ENCODE measurements at regions of chr22 and their contacts with region 1.

Region 1: GRCh38 chr22:41940832-41941765 is 5.9 kb downstream of the CENPM start:
- DNase-seq: peak; percentile 80 to 91 (median 84)
- ATAC-seq: peak; percentile 78 to 88 (median 87)
- H3K4me3 ChIP-seq: no peak overlapping the region
- H3K27ac ChIP-seq: peak overlapping the region in 5 of 12 donors; percentile 13 to 84 (median 23)
- H3K4me1 ChIP-seq: peaks cover 0 to 43% (median 14%) of the 10 kb centered on the region in 12 donors
- H3K27me3 ChIP-seq: no peaks in the 10 kb centered on the region
- CTCF ChIP-seq: peak; percentile 85 to 97 (median 93)
- POLR2A ChIP-seq: no peak

Region 2: DNA sequence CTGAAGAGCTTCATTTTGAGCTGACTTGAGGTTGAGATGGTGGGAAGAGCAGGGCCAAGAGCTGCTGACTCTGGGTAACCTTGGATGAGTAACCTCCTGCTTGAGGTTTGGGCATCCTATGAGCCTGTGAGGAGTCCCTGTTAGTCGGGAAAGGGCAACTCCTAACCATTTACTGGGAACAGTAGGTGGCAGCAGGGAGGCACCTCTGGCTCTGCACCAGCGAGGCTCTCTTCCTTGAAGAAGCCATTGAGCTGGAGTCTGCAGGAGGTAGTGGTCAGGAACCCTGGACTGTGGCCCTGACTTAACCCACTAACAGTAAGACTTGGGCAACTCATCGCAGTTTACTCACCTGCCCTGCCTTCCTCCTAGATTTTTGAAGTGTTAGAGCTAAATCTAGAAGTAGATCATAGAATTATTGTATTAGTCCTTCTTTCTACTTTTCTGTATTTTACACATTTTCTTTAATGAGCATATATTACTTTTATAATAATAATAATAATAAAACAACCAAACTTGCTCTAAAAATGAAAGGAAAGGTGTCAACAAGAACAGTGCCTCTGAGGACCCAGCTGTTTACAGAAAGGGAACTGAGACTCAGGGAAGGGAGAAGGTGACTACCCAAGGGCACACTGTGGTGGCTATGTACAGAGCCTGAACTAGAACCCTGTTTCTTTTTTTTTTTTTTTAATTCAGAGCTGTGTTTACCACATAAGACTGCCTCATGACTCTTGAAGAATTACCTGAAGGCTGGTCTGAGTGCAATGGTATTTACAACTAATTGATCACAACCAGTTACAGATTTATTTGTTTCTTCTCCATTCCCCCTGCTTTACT is 194.3 kb before region 1 on chr22:
- intact Hi-C with region 1: loop called (anchors 1 to 5 kb)
- DNase-seq: peak; percentile 59 to 82 (median 69)
- ATAC-seq: peak; percentile 64 to 94 (median 88)
- H3K4me3 ChIP-seq: no peak overlapping the region
- H3K27ac ChIP-seq: no peak overlapping the region
- H3K4me1 ChIP-seq: no peaks in the 10 kb centered on the region
- H3K27me3 ChIP-seq: peaks cover 0 to 6% (median 0%) of the 10 kb centered on the region in 9 donors
- CTCF ChIP-seq: peak; percentile 51 to 79 (median 68)
- POLR2A ChIP-seq: no peak

Region 3: GRCh38 chr22:41822317-41823060 is 118.6 kb before region 1 on chr22:
- intact Hi-C with region 1: loop called (anchors 1 to 5 kb)
- DNase-seq: no peak
- ATAC-seq: peak in 2 of 4 donors; percentile 16 to 26
- H3K4me3 ChIP-seq: no peak overlapping the region
- H3K27ac ChIP-seq: no peak overlapping the region
- H3K4me1 ChIP-seq: peaks cover 3 to 29% (median 22%) of the 10 kb centered on the region in 12 donors
- H3K27me3 ChIP-seq: no peaks in the 10 kb centered on the region
- CTCF ChIP-seq: peak; percentile 18 to 61 (median 48)
- POLR2A ChIP-seq: no peak

Region 4: GRCh38 chr22:41891407-41891806 is 49.7 kb before region 1 on chr22:
- intact Hi-C with region 1: loop called in 1 of 10 experiments (anchors 5 kb)
- DNase-seq: peak in 1 of 5 donors; percentile 76
- ATAC-seq: peak; percentile 47 to 91 (median 76)
- H3K4me3 ChIP-seq: no peak overlapping the region
- H3K27ac ChIP-seq: peak overlapping the region in 11 of 12 donors; percentile 24 to 87 (median 75)
- H3K4me1 ChIP-seq: peaks cover 0 to 37% (median 6%) of the 10 kb centered on the region in 12 donors
- H3K27me3 ChIP-seq: no peaks in the 10 kb centered on the region
- CTCF ChIP-seq: no peak
- POLR2A ChIP-seq: no peak

Region 5: DNA sequence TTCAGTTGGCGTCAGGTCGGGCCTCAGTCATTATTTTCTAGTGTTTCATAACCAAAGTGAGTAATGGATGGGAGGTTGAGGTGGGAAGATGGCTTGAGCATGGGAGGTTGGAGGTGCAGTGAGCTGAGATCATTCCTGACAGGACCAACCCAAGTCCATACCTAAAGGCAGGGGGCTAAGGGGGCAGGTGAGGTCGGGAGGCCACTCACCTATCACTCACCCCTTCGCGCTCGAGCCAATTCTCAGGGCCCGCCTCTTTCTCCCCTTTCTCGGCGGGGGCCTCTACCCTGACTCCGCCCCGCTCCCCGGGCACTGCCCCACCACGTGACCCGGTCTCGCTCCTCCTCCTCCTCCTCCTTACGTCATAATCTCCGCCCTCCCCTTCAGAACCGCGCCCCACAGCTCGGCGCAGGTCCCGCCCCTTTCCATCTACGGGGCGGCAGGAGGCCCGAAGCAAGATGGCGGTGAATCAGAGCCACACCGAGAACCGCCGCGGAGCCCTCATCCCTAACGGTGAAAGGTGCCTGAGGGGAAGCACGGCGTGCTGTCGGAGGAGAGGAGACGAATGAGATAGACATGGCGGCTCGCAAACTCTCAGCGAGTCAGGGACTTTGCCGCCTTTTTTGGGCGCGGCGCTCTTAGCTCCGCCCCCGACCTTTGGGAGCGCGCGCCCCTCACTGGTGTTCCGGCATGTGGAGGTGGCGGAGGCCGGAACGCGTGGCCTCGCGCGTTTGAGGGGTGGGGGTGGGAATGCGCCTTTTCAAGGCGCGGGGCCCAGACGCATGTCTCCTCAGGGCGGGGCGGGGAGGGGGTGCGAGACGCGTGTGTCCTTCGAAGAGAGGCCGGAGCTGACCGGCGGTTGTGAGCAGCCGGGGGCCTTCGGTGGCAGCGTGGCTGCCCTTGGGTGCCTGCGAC is 57.5 kb after region 1 on chr22 and contains the start of gene WBP2NL:
- intact Hi-C with region 1: no loop called
- DNase-seq: peak; percentile 78 to 91 (median 82)
- ATAC-seq: peak; percentile 93 to 98 (median 96)
- H3K4me3 ChIP-seq: peak within 1 kb of the TSS; percentile 3 to 69 (median 55)
- H3K27ac ChIP-seq: peak within 1 kb of the TSS in 2 of 12 donors; percentile 3 to 60
- H3K4me1 ChIP-seq: peaks cover 0 to 19% (median 2%) of the 10 kb centered on the region in 12 donors
- H3K27me3 ChIP-seq: peaks cover 0 to 10% (median 0%) of the 10 kb centered on the region in 9 donors
- CTCF ChIP-seq: no peak
- POLR2A ChIP-seq: peak in 1 of 2 donors; percentile 17
- total RNA-seq, gene WBP2NL: 0.30 to 1.1 (median 0.40) TPM in 8 of 9 donors, not detected in the other

Region 6: DNA sequence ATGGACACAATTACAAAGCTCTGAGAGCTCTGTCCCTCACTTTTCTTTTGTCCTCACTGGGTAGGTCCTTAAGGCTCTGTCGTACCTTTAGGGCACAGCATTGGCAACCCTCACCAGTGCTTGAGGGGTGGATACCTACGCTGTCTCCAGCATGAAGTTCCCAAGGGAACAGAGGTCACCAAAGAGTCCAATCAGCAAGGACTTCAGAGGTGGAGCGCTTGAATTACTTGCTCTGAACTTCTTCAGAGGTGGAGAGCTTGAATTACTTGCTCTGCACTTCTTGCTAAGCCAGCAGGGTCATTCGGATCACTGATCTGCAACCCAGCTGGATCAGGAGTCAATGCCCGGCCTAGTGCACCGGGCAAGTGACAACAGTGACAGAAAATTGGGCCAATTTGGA is 543.4 kb after region 1 on chr22:
- intact Hi-C with region 1: no loop called
- DNase-seq: no peak
- ATAC-seq: no peak
- H3K4me3 ChIP-seq: no peak overlapping the region
- H3K27ac ChIP-seq: no peak overlapping the region
- H3K4me1 ChIP-seq: no peaks in the 10 kb centered on the region
- H3K27me3 ChIP-seq: peaks cover 0 to 13% (median 0%) of the 10 kb centered on the region in 9 donors
- CTCF ChIP-seq: no peak
- POLR2A ChIP-seq: no peak